ENCODE measurements at regions of chr13 and their contacts with region 1.

Region 1: GRCh38 chr13:113816946-113817859 is 46.7 kb downstream of the GAS6 start:
- DNase-seq: peak; percentile 87 to 94 (median 91)
- ATAC-seq: peak; percentile 59 to 63
- H3K4me3 ChIP-seq: no peak overlapping the region
- H3K27ac ChIP-seq: peak overlapping the region; percentile 46
- H3K4me1 ChIP-seq: peaks cover 8% of the 10 kb centered on the region
- H3K27me3 ChIP-seq: no peaks in the 10 kb centered on the region

Region 2: GRCh38 chr13:113774177-113775107 is 42.8 kb before region 1 on chr13:
- intact Hi-C with region 1: no loop called
- DNase-seq: no peak
- ATAC-seq: peak in 1 of 2 donors; percentile 31
- H3K4me3 ChIP-seq: no peak overlapping the region
- H3K27ac ChIP-seq: no peak overlapping the region
- H3K4me1 ChIP-seq: peaks cover 4% of the 10 kb centered on the region
- H3K27me3 ChIP-seq: no peaks in the 10 kb centered on the region

Region 3: GRCh38 chr13:113863436-113864272 is 46.5 kb after region 1 on chr13 and contains the start of gene GAS6:
- intact Hi-C with region 1: loop called in 1 of 4 experiments (anchors 5 kb)
- DNase-seq: peak; percentile 70 to 89 (median 87)
- ATAC-seq: peak; percentile 66 to 69
- H3K4me3 ChIP-seq: peak within 1 kb of the TSS; percentile 79
- H3K27ac ChIP-seq: peak within 1 kb of the TSS; percentile 68
- H3K4me1 ChIP-seq: peaks cover 3% of the 10 kb centered on the region
- H3K27me3 ChIP-seq: no peaks in the 10 kb centered on the region
- total RNA-seq, gene GAS6: 197 to 213 (median 202) TPM

Region 4: GRCh38 chr13:113881614-113882266 is 64.5 kb after region 1 on chr13:
- intact Hi-C with region 1: loop called in 1 of 4 experiments (anchors 5 kb)
- DNase-seq: peak in 1 of 3 donors; percentile 36
- ATAC-seq: peak; percentile 34 to 40
- H3K4me3 ChIP-seq: no peak overlapping the region
- H3K27ac ChIP-seq: peak overlapping the region; percentile 89
- H3K4me1 ChIP-seq: peaks cover 11% of the 10 kb centered on the region
- H3K27me3 ChIP-seq: no peaks in the 10 kb centered on the region

Region 5: DNA sequence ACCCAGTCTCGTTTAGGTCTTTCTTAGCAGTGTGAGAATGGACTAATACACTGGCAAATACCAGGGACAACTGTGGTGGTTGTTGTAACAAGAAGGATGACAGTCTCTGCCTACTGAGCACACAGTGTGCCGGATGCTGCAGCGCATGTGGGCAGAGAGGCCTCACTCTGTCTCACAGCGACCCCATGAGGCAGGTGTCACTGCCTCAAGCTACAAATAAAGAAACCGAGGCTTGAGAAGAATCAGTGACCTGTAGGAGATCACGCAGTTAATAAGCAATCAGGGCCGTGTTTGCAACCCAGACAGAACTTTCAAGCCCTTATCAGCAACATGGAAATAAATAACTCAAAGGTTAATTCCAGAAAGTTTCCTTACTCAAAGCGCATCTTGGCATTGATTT is 87.2 kb after region 1 on chr13:
- intact Hi-C with region 1: loop called in 3 of 4 experiments (anchors 2 to 10 kb)
- DNase-seq: peak; percentile 61 to 86 (median 79)
- ATAC-seq: peak; percentile 89
- H3K4me3 ChIP-seq: no peak overlapping the region
- H3K27ac ChIP-seq: no peak overlapping the region
- H3K4me1 ChIP-seq: no peaks in the 10 kb centered on the region
- H3K27me3 ChIP-seq: no peaks in the 10 kb centered on the region

Region 6: DNA sequence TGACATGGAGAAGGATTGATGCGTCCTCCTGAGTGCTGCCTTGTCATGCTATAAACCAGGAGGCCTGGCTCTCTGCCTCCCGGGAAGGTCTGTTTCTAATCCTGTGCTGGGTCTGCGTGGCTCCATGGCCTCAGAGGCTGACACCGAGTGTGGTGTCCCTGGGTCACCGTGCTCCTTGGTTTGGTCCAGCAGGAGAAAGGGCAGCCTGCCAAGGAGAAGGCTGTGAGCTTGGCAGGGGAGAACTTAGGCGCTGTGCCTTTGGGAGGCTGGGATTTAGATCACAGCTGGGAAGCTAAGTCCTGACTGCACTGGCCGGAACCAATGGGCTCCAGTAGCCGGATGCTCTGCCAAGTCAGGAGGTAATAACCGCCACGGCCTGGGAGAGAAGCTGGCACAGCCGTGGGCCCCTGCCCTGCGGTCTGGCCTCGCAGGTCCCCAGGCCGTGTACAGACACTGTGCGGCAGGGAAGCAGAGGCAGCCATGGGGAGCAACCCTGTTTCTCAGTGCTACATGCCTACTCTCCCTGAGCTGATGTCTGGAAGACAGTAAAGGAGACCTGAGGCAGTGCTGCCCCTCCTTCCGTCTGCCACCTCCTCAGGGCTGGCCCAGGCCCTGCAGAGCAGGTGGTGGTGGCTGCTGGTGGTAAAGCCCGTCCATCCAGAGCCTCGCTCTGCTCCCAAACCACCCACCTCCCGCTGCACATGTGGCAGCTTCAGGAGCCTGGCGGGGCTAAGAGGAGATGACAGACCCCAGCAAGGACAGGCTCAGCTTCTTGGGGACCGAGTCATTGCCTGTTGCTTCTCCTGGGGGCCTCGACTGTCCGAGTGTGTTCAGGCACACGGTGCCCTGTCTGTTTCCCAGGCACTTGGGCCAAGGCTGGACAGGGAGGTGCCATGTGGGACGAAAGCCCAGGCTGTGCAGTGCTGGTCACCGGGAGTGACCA is 111.8 kb after region 1 on chr13:
- intact Hi-C with region 1: no loop called
- DNase-seq: peak; percentile 84 to 93 (median 93)
- ATAC-seq: peak; percentile 81 to 88
- H3K4me3 ChIP-seq: no peak overlapping the region
- H3K27ac ChIP-seq: peak overlapping the region; percentile 3
- H3K4me1 ChIP-seq: peaks cover 4% of the 10 kb centered on the region
- H3K27me3 ChIP-seq: no peaks in the 10 kb centered on the region

Region 7: DNA sequence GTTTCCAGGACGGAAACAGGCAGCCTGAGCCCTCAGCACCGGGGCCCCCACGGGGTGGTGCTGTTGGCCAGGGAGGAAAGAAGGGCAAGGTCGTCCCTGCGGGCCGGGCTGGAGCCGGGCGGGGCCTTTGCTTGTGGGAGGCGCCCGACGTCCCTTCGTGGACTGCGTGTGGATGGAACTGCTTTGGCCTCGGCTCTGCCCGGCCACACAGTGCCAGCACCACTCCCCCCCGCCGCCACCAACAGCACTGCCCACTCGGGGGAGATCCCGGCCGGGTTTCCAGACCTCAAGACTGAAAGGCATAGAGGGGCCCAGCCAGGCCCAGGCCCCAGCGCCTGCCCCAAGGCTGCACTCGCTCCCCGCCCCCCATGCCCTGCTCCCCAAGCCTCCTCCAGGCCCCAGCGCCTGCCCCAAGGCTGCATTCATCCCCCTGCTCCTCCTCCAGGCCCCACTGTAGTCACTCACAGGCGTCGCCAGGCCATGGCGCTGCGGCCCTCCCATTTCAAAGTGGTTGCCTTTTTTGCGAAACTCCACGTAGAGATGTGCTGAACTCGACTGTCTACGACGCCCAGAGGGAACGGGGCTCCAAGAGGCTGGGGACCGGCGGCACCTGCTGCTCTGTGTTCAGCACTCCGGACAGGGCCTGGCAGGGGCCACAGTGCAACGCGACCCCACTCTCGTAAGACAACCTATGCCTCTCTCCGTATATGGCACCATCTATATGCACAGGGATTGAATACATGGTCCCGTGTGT is 134.2 kb after region 1 on chr13:
- intact Hi-C with region 1: loop called in 2 of 4 experiments (anchors 5 kb)
- DNase-seq: peak; percentile 90 to 96 (median 94)
- ATAC-seq: peak; percentile 93 to 95
- H3K4me3 ChIP-seq: no peak overlapping the region
- H3K27ac ChIP-seq: no peak overlapping the region
- H3K4me1 ChIP-seq: no peaks in the 10 kb centered on the region
- H3K27me3 ChIP-seq: no peaks in the 10 kb centered on the region

Region 8: GRCh38 chr13:114226699-114227323 is 409.6 kb after region 1 on chr13:
- intact Hi-C with region 1: loop called in 1 of 4 experiments (anchors 5 kb)
- DNase-seq: peak; percentile 80 to 93 (median 90)
- ATAC-seq: peak; percentile 85 to 88
- H3K4me3 ChIP-seq: no peak overlapping the region
- H3K27ac ChIP-seq: no peak overlapping the region
- H3K4me1 ChIP-seq: no peaks in the 10 kb centered on the region
- H3K27me3 ChIP-seq: no peaks in the 10 kb centered on the region

Measured in right cardiac atrium (tissue), 5 donors.